ENCODE measurements at regions of chr6 and their contacts with region 1.

Region 1: GRCh38 chr6:137165375-137166246 is 7.8 kb downstream of the IL22RA2 start:
- DNase-seq: peak; percentile 64
- H3K4me3 Mint-ChIP-seq: no peak overlapping the region
- H3K27ac Mint-ChIP-seq: no peak overlapping the region
- H3K4me1 Mint-ChIP-seq: peaks cover 27% of the 10 kb centered on the region
- H3K27me3 Mint-ChIP-seq: peaks cover 13% of the 10 kb centered on the region

Region 2: DNA sequence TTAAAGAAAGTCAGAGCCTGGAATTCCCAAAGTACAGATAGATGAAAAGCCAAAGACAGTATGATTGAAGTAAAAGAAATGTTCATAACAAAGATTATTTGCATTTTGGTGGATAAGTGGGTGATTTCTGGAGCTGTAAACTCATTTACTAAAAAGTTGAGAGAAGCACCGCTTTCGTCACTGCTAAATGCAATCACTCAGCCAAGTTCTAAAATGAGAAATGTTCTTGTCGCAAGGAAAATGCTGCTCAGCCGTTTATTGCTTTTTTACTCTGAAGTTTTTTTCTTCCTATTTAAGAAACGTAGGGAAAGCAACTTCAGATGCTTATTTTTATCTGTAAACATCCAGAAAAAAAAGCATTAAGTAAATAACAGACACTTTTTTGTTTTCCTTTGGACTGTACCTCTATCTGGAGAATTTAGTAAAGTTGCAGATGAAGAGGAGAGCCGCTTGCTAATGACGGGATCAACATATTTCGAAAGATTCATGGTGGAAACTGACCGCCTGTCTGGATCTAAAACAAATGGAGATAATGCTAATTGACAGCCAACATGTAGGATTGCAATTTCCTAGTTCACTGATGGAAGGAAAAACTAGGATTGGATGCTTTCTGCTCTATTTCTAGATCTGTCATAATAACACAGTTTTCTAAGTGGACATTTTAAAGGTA is 782.2 kb before region 1 on chr6:
- CTCF ChIA-PET with region 1: no interaction called
- intact Hi-C with region 1: no loop called
- DNase-seq: no peak
- H3K4me3 Mint-ChIP-seq: no peak overlapping the region
- H3K27ac Mint-ChIP-seq: no peak overlapping the region
- H3K4me1 Mint-ChIP-seq: no peaks in the 10 kb centered on the region
- H3K27me3 Mint-ChIP-seq: no peaks in the 10 kb centered on the region

Region 3: GRCh38 chr6:136751522-136751956 is 414.1 kb before region 1 on chr6:
- CTCF ChIA-PET with region 1: no interaction called
- intact Hi-C with region 1: loop called (anchors 5 kb)
- DNase-seq: peak; percentile 55
- H3K4me3 Mint-ChIP-seq: peak overlapping the region; percentile 23
- H3K27ac Mint-ChIP-seq: peak overlapping the region; percentile 74
- H3K4me1 Mint-ChIP-seq: peaks cover 67% of the 10 kb centered on the region
- H3K27me3 Mint-ChIP-seq: no peaks in the 10 kb centered on the region

Region 4: GRCh38 chr6:137081997-137082396 is 83.6 kb before region 1 on chr6:
- CTCF ChIA-PET with region 1: no interaction called
- intact Hi-C with region 1: no loop called
- DNase-seq: no peak
- H3K4me3 Mint-ChIP-seq: no peak overlapping the region
- H3K27ac Mint-ChIP-seq: no peak overlapping the region
- H3K4me1 Mint-ChIP-seq: peaks cover 5% of the 10 kb centered on the region
- H3K27me3 Mint-ChIP-seq: peaks cover 5% of the 10 kb centered on the region

Region 5: GRCh38 chr6:137102851-137103492 is 62.6 kb before region 1 on chr6:
- CTCF ChIA-PET with region 1: interaction called, 3 read pairs
- intact Hi-C with region 1: loop called (anchors 1 kb)
- DNase-seq: peak; percentile 38
- H3K4me3 Mint-ChIP-seq: no peak overlapping the region
- H3K27ac Mint-ChIP-seq: peak overlapping the region; percentile 46
- H3K4me1 Mint-ChIP-seq: peaks cover 6% of the 10 kb centered on the region
- H3K27me3 Mint-ChIP-seq: no peaks in the 10 kb centered on the region

Region 6: GRCh38 chr6:137188855-137189254 is 23.2 kb after region 1 on chr6:
- CTCF ChIA-PET with region 1: no interaction called
- intact Hi-C with region 1: no loop called
- DNase-seq: peak; percentile 19
- H3K4me3 Mint-ChIP-seq: no peak overlapping the region
- H3K27ac Mint-ChIP-seq: no peak overlapping the region
- H3K4me1 Mint-ChIP-seq: no peaks in the 10 kb centered on the region
- H3K27me3 Mint-ChIP-seq: no peaks in the 10 kb centered on the region

Region 7: DNA sequence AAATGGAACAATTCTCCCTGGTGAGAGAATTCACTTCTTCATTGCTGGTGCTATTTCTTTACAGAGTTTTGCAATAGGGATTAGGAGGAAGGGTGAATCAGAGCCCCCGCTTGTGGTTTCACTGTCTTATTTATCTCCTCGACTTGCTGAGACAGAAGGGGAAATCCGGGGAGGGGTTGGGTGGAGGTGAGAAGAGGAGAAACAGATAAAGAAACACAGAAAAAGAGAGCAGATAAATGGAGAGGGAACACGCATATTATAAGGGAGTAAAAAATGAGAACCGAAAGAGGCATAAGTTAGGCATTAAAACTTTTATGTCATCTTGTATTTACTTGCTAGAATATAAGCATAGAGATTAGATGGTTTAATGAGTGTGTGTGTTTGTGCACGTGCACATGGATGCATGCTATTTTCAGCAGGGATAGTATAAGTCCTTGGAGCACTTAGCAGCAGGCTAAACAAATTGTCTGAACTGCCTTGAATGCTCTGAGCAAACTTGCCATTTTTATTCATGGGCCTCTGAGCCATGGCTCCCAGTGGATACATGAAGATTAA is 223.6 kb after region 1 on chr6:
- CTCF ChIA-PET with region 1: no interaction called
- intact Hi-C with region 1: loop called (anchors 1 kb)
- DNase-seq: peak; percentile 93
- H3K4me3 Mint-ChIP-seq: no peak overlapping the region
- H3K27ac Mint-ChIP-seq: peak overlapping the region; percentile 10
- H3K4me1 Mint-ChIP-seq: peaks cover 36% of the 10 kb centered on the region
- H3K27me3 Mint-ChIP-seq: no peaks in the 10 kb centered on the region

Region 8: GRCh38 chr6:137680705-137681346 is 515.2 kb after region 1 on chr6:
- CTCF ChIA-PET with region 1: no interaction called
- intact Hi-C with region 1: loop called (anchors 1 kb)
- DNase-seq: no peak
- H3K4me3 Mint-ChIP-seq: no peak overlapping the region
- H3K27ac Mint-ChIP-seq: peak overlapping the region; percentile 84
- H3K4me1 Mint-ChIP-seq: peaks cover 54% of the 10 kb centered on the region
- H3K27me3 Mint-ChIP-seq: peaks cover 8% of the 10 kb centered on the region

Region 9: DNA sequence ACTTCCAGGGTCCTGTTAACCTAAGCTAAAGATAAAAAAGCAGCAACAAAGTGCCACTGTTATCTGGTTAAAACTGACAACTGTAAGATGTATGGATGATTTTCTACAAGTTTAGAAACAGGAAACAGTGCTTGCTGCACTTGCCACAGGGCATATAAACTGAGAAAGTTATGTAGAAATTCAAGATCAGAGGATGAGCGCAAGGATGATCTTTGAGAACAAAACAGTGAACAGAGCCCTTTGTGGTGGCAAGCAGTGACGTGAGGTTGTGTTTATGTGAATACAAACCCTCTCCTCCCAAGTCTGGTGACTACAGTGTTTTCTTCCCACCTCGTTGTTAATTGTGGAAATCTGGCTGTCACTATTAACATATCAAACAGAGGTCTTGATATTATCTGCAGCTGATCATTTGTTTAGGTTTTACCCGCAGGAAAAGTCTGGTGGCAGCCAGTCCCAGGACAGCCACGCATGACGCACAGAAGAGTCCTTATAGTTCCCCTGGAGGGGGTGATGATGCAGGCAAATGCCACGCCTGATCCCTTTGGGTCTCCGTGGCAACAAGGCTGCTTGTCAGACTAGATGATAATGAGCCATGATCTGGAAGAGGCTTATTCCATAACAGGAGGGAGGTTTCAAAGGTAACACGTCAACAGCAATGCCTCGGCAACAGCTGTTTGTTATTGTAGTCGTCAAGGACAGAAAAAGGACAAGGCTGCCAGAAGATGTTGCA is 658.4 kb after region 1 on chr6:
- CTCF ChIA-PET with region 1: no interaction called
- intact Hi-C with region 1: loop called (anchors 10 kb)
- DNase-seq: peak; percentile 84
- H3K4me3 Mint-ChIP-seq: peak overlapping the region; percentile 67
- H3K27ac Mint-ChIP-seq: peak overlapping the region; percentile 95
- H3K4me1 Mint-ChIP-seq: peaks cover 81% of the 10 kb centered on the region
- H3K27me3 Mint-ChIP-seq: no peaks in the 10 kb centered on the region

Region 10: GRCh38 chr6:138188278-138188941 is 1022.8 kb after region 1 on chr6:
- CTCF ChIA-PET with region 1: no interaction called
- intact Hi-C with region 1: no loop called
- DNase-seq: no peak
- H3K4me3 Mint-ChIP-seq: no peak overlapping the region
- H3K27ac Mint-ChIP-seq: no peak overlapping the region
- H3K4me1 Mint-ChIP-seq: no peaks in the 10 kb centered on the region
- H3K27me3 Mint-ChIP-seq: peaks cover 11% of the 10 kb centered on the region